ENCODE measurements at regions of chr7 and their contacts with region 1.

Region 1: DNA sequence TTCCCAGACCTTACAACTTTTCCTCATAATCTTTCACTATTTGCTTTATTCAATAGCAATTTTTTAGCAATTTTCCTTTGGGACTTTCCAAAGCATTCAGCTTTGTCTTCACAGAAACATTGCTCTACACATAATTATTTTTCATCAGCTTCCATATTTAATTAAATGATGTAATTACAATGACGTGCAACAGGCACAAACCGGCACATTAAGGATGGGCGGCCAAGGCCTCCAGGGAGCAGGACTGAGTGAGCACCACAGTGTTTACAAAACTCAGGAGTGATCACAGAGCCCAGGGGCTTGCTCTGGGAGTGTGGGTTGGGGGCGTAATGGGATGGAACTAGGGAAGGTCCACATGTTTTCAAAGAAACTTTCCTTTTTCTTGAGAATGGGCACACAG is 69.8 kb downstream of the MAD1L1 start:
- DNase-seq: no peak
- H3K4me3 ChIP-seq: no peak overlapping the region
- H3K27ac ChIP-seq: no peak overlapping the region
- H3K4me1 ChIP-seq: peaks cover 20% of the 10 kb centered on the region
- H3K27me3 ChIP-seq: no peaks in the 10 kb centered on the region
- CTCF ChIP-seq: no peak

Region 2: DNA sequence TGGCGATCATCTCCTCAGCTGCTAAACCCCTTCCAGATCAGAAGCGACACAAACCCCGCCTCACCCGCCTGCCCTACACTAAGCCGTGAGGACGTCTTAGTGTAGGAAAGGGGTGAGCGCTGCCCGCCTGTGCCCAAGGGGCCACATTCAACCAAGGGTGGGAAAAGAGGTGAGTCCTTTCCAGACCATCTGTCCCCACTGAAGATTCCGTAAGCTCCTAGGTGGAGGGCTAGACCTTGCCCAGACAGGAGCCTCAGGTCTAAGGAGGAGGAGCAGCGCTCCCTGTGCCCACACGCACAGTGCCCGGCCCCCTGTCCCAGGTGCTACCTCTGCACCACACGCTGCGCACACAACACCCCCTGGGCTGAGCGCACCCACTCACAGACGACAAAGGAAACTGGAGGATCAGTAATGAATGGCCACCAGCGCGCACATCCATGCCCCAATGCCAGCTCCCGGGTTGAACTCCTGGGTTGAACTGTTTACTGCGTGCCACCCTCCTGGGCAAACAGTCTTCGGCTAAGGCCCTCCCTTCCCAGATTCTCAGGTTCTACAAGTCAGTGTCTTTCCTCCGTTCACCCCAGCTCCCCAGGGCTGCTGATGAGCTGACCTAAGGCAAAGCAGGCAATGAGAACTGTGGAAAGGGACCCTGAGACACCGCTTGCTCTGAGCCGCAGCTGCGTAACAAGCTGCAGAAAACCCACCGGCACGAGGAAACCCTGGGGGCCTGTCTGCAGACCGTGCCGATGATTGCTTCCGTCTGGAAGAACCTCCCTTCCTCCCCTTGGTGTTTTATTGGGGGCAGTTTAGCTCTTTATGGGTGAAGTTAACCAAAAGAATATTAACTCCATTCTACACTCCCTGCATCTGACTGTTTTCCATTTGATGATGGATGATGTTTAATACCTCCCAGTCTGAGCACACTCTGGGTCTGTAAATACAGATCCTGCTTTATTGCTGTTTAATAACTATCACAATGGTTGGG is 116.1 kb before region 1 on chr7:
- CTCF ChIA-PET with region 1: no interaction called
- POLR2A ChIA-PET with region 1: no interaction called
- intact Hi-C with region 1: no loop called
- DNase-seq: no peak
- H3K4me3 ChIP-seq: no peak overlapping the region
- H3K27ac ChIP-seq: no peak overlapping the region
- H3K4me1 ChIP-seq: peaks cover 19% of the 10 kb centered on the region
- H3K27me3 ChIP-seq: no peaks in the 10 kb centered on the region
- CTCF ChIP-seq: no peak

Region 3: DNA sequence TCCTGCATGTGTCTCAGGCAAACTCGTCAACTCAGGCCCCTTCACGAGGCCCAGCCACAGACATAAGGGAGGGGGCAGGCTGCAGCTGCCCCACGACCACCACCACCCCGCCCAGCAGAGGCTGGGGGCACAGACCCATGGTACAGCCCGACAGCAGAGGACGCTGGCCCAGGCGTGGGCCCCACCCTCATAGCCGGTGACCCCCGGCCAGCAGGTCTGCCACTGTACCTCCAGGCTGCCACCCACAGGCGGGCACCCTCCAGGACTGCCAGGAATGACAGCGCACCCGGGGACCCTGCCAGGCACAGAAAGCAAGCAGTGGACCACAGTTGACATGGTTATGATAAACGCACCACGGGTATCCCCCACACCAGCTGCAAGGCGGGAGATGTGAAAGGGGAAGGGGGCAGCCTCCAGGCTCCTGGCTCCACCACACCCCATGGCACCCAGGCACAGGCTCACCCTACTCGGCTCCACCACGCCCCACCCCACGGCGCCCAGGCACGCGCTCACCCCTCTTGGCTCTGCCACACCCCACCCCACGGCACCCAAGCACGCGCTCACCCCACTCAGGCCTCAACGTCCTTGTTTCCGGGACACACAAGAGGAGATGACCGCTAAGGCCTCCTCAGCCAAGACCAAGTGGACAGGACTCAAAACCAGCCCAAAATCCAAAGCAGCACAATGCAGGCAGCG is 66.1 kb before region 1 on chr7:
- CTCF ChIA-PET with region 1: no interaction called
- POLR2A ChIA-PET with region 1: interaction called, 14 read pairs
- intact Hi-C with region 1: no loop called
- DNase-seq: no peak
- H3K4me3 ChIP-seq: no peak overlapping the region
- H3K27ac ChIP-seq: no peak overlapping the region
- H3K4me1 ChIP-seq: peaks cover 3% of the 10 kb centered on the region
- H3K27me3 ChIP-seq: no peaks in the 10 kb centered on the region
- CTCF ChIP-seq: no peak